Transverse colon (tissue), 4 donors: ENCODE measurements at regions of chr1 and their contacts with region 1.

Region 1: DNA sequence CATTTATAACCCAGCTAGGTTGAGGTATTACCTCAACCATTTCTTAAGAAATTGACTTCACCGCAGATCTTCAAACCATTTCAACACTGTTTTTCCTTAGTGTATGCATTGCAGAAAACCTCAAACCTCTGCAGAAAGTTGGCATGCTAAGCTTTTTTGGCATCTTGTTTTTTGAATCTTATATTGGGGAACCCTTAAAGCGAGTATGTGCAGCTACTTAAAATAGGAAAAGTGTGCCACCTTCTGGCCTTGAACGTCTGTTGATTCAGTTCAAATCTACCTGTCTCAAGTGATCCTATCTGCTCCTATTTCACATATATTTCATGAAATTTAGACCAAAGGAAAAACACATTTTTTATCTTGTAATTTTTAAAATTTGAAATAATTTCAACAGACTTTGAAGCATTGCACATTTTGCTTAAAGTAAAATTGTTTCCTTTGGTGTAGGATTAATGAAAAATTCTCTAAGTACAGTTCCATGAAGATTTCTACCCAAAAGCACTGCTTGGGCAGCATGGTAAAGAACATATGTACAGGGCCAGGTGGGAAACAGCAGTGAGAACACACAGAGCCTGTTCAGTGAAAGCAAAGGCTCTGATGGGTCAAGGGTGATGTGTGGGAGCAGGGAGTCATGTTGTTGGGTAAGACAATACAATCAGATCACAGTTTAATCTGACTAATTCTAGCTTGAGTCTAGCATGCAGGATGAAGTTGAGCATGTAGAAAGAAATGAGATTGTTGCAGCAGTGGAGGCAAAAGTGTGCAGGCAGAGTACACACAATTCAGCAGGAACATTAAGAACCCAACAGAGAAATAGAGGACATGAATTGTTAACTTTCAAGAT is 17.2 kb downstream of the HENMT1 start:
- DNase-seq: peak; percentile 53
- H3K4me3 ChIP-seq: no peak overlapping the region
- H3K27ac ChIP-seq: no peak overlapping the region
- H3K4me1 ChIP-seq: peaks cover 15 to 43% (median 22%) of the 10 kb centered on the region in 4 donors
- H3K27me3 ChIP-seq: no peaks in the 10 kb centered on the region
- CTCF ChIP-seq: peak; percentile 49 to 74 (median 58)
- EP300 ChIP-seq: no peak
- POLR2A ChIP-seq: no peak

Region 2: GRCh38 chr1:108199781-108200570 is 443.7 kb before region 1 on chr1 and contains the start of gene SLC25A24:
- in situ Hi-C with region 1: loop called in 2 of 4 experiments (anchors 25 kb)
- intact Hi-C with region 1: no loop called
- DNase-seq: peak; percentile 90
- H3K4me3 ChIP-seq: peak within 1 kb of the TSS; percentile 90 to 95 (median 92)
- H3K27ac ChIP-seq: peak within 1 kb of the TSS; percentile 97 to 98 (median 98)
- H3K4me1 ChIP-seq: peaks cover 0 to 33% (median 21%) of the 10 kb centered on the region in 4 donors
- H3K27me3 ChIP-seq: no peaks in the 10 kb centered on the region
- CTCF ChIP-seq: no peak
- EP300 ChIP-seq: no peak
- POLR2A ChIP-seq: peak; percentile 68
- total RNA-seq, gene SLC25A24: 56.5 to 83.0 (median 77.3) TPM

Region 3: GRCh38 chr1:108503076-108503740 is 140.5 kb before region 1 on chr1:
- in situ Hi-C with region 1: loop called in 2 of 4 experiments (anchors 10 to 25 kb)
- intact Hi-C with region 1: no loop called
- DNase-seq: no peak
- H3K4me3 ChIP-seq: no peak overlapping the region
- H3K27ac ChIP-seq: no peak overlapping the region
- H3K4me1 ChIP-seq: no peaks in the 10 kb centered on the region
- H3K27me3 ChIP-seq: peaks cover 6% of the 10 kb centered on the region
- CTCF ChIP-seq: no peak
- EP300 ChIP-seq: no peak
- POLR2A ChIP-seq: no peak

Region 4: GRCh38 chr1:108512239-108512981 is 131.3 kb before region 1 on chr1:
- in situ Hi-C with region 1: loop called in 3 of 4 experiments (anchors 5 to 25 kb)
- intact Hi-C with region 1: loop called (anchors 2 kb)
- DNase-seq: no peak
- H3K4me3 ChIP-seq: no peak overlapping the region
- H3K27ac ChIP-seq: no peak overlapping the region
- H3K4me1 ChIP-seq: no peaks in the 10 kb centered on the region
- H3K27me3 ChIP-seq: no peaks in the 10 kb centered on the region
- CTCF ChIP-seq: peak; percentile 79 to 91 (median 84)
- EP300 ChIP-seq: no peak
- POLR2A ChIP-seq: no peak

Region 5: GRCh38 chr1:108559215-108560186 is 84.2 kb before region 1 on chr1 and contains the start of gene EEIG2:
- in situ Hi-C with region 1: loop called in 2 of 4 experiments (anchors 10 kb)
- intact Hi-C with region 1: no loop called
- DNase-seq: peak; percentile 94
- H3K4me3 ChIP-seq: peak within 1 kb of the TSS; percentile 68 to 82 (median 73)
- H3K27ac ChIP-seq: peak within 1 kb of the TSS; percentile 89 to 90 (median 89)
- H3K4me1 ChIP-seq: peaks cover 11 to 46% (median 24%) of the 10 kb centered on the region in 4 donors
- H3K27me3 ChIP-seq: no peaks in the 10 kb centered on the region
- CTCF ChIP-seq: peak; percentile 39 to 87 (median 75)
- EP300 ChIP-seq: peak; percentile 34
- POLR2A ChIP-seq: no peak
- total RNA-seq, gene EEIG2: 15.7 to 27.0 (median 24.9) TPM